Ovary (tissue), 10 donors: ENCODE measurements at regions of chr5 and their contacts with region 1.

Region 1: DNA sequence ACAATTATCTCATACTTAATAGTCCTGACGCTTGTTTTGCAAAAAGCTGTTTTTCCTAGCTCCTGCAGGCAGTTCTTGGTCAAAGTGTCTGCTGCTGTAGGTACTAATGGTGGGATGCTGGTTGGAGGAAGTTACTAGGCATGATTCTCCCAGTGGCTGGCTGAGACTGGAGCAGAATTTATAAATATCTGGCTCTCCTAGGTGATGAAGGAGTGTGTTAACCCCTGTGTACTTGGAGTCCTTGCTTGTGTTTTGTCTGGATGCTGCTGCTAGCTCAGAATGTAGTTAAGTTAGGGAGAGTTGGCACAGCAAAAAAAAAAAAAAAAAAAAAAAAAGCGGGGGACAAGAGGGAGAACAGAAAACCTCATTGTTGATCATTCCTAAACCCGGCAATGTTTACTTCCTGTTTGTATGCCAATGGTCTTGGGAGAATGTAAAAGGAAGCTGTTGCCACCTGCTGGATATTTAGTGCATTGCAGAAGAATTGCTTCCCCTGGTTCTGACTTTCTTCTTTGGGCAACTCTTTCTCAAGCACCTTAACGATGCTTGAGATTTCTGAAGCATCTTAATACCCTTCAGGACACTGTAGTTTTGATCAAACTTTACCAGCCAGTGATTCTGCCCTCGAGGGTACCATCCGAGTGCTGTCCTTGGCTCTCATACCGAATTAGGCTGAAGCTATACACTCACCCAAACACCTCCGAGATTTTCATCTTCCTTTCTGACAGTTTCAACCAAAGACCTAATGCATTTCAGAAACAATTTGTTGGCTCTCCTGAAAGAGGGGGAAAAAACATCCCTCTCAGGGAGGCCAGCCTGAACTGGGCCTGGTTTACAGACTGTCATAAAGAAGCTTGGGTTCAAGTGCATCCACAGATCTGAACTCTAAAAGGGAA is 71.7 kb upstream of the WWC1 start:
- DNase-seq: peak in 2 of 5 donors; percentile 19 to 42
- H3K4me3 ChIP-seq: no peak overlapping the region
- H3K27ac ChIP-seq: no peak overlapping the region
- H3K4me1 ChIP-seq: no peaks in the 10 kb centered on the region
- H3K27me3 ChIP-seq: no peaks in the 10 kb centered on the region
- CTCF ChIP-seq: peak in 2 of 3 donors; percentile 54 to 79
- EP300 ChIP-seq: no peak
- POLR2A ChIP-seq: no peak

Region 2: DNA sequence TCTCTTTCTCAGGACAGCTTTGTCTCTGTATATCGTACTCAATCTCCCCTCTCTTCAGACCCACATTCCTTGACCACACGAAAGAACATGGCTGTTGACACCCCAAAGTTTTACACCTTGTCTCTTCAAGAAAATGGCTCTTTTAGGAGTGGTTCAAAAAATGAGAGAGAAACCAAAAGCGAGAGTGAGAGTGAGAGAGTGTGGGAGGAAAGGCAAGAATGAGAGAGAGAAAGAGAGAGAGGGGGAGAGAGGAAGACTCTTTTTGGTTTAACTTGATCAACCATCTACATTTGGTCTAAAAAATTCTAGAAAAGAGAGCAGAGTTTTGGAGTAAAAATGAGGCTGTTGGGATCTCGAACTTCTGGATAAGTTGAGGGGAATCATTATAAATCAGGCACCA is 510.1 kb before region 1 on chr5:
- intact Hi-C with region 1: loop called in 1 of 4 experiments (anchors 10 kb)
- DNase-seq: no peak
- H3K4me3 ChIP-seq: no peak overlapping the region
- H3K27ac ChIP-seq: no peak overlapping the region
- H3K4me1 ChIP-seq: peaks cover 2% of the 10 kb centered on the region
- H3K27me3 ChIP-seq: no peaks in the 10 kb centered on the region
- CTCF ChIP-seq: no peak
- EP300 ChIP-seq: no peak
- POLR2A ChIP-seq: no peak

Region 3: DNA sequence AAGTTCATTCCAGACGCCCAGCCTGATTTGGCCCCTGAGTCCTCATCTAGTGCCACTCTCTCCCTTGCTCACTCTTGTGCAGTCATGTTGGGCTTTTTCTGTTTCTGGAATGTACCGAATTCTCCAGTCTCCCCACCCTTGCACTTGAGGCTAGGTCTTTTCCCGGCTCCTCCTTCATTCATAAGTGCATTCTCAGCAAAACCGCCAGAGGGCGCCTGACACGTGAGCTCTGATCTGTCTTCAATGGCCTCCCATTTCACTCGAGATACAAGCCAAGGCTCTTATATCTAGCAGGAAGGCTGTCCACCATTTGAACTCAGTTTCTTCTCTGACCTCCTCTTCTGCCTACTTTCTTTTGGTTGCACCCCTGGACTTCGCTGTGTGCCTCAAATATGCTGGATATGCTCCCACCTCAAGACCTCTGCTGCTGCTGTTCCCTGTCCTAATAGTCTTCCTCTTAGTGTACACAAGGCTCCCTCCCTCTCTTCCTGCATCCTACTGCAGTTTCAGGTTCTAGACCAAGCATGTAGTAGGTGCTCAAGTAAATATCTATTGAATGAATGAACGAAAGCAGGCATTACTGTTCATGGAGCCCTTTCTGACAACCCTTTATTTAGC is 496.4 kb before region 1 on chr5:
- intact Hi-C with region 1: loop called (anchors 10 kb)
- DNase-seq: peak; percentile 23 to 71 (median 58)
- H3K4me3 ChIP-seq: no peak overlapping the region
- H3K27ac ChIP-seq: no peak overlapping the region
- H3K4me1 ChIP-seq: no peaks in the 10 kb centered on the region
- H3K27me3 ChIP-seq: no peaks in the 10 kb centered on the region
- CTCF ChIP-seq: peak in 1 of 3 donors; percentile 54
- EP300 ChIP-seq: no peak
- POLR2A ChIP-seq: no peak

Region 4: GRCh38 chr5:169197343-169197742 is 977.6 kb after region 1 on chr5:
- intact Hi-C with region 1: no loop called
- DNase-seq: no peak
- H3K4me3 ChIP-seq: no peak overlapping the region
- H3K27ac ChIP-seq: no peak overlapping the region
- H3K4me1 ChIP-seq: peaks cover 2% of the 10 kb centered on the region
- H3K27me3 ChIP-seq: no peaks in the 10 kb centered on the region
- CTCF ChIP-seq: peak in 1 of 3 donors; percentile 7
- EP300 ChIP-seq: no peak
- POLR2A ChIP-seq: no peak